ENCODE measurements at regions of chr11 and their contacts with region 1.

Region 1: GRCh38 chr11:45110562-45110961 is 35.9 kb upstream of the PRDM11 start:
- DNase-seq: peak; percentile 52
- ATAC-seq: peak; percentile 65
- H3K4me3 Mint-ChIP-seq: no peak overlapping the region
- H3K27ac Mint-ChIP-seq: no peak overlapping the region
- H3K4me1 Mint-ChIP-seq: no peaks in the 10 kb centered on the region
- H3K27me3 Mint-ChIP-seq: peaks cover 42% of the 10 kb centered on the region

Region 2: DNA sequence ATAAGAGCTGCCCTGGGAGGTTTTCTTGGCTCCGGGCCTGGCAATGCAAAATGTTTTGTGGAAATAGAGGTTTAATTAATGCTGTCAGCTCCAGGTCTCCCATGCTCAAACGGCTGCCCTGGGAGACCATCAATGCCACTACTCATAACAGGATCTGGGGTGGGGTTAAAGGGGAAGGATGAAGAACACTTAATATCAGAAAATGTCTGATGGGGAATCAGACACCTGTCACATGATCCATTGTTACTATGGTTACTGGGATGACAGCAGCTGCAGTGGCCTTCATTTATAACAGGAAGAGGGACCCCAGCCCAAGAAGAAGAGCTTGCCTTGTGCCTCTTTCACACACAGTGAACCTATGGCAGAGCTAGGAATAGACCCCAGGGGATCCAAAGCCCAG is 177.8 kb after region 1 on chr11:
- CTCF ChIA-PET with region 1: interaction called, 26 read pairs
- DNase-seq: no peak
- ATAC-seq: no peak
- H3K4me3 Mint-ChIP-seq: no peak overlapping the region
- H3K27ac Mint-ChIP-seq: no peak overlapping the region
- H3K4me1 Mint-ChIP-seq: no peaks in the 10 kb centered on the region
- H3K27me3 Mint-ChIP-seq: peaks cover 92% of the 10 kb centered on the region

Region 3: GRCh38 chr11:45294499-45294898 is 183.9 kb after region 1 on chr11:
- CTCF ChIA-PET with region 1: interaction called, 26 read pairs
- DNase-seq: no peak
- ATAC-seq: no peak
- H3K4me3 Mint-ChIP-seq: no peak overlapping the region
- H3K27ac Mint-ChIP-seq: no peak overlapping the region
- H3K4me1 Mint-ChIP-seq: no peaks in the 10 kb centered on the region
- H3K27me3 Mint-ChIP-seq: peaks cover 58% of the 10 kb centered on the region

Region 4: GRCh38 chr11:45332276-45332934 is 221.8 kb after region 1 on chr11:
- CTCF ChIA-PET with region 1: interaction called, 15 read pairs
- DNase-seq: no peak
- ATAC-seq: peak; percentile 20
- H3K4me3 Mint-ChIP-seq: no peak overlapping the region
- H3K27ac Mint-ChIP-seq: no peak overlapping the region
- H3K4me1 Mint-ChIP-seq: no peaks in the 10 kb centered on the region
- H3K27me3 Mint-ChIP-seq: peaks cover 19% of the 10 kb centered on the region

Measured in activated CD8-positive, alpha-beta memory T cell treated with anti-CD3 and anti-CD28 coated beads, Interleukin-2, amount 10 ng/mL, durations not matched to agents 7 days and 5 days (primary cell).